Breast epithelium (tissue), 4 donors: ENCODE measurements at regions of chr5 and their contacts with region 1.

Region 1: DNA sequence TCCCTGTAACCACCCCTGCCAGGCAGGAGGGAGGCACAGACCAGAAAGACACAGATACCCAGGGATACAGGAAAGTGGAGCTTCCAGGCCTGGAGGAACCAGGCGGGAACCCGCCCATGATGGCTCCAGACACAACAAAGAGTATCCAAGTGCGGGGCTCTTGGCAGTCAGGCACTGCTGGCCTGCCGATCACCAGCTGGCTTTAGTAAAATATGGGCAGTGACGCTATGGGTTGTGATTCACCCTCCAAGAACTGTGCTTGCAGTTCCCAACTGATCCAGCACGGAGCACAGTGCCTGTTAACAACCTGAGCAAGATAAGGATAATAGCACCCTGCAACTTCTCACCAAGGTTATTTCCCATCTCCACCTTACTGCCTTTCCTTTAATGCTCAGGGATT is 463.3 kb downstream of the IRX1 start:
- DNase-seq: no peak
- H3K4me3 ChIP-seq: no peak overlapping the region
- H3K27ac ChIP-seq: no peak overlapping the region
- H3K4me1 ChIP-seq: no peaks in the 10 kb centered on the region
- H3K27me3 ChIP-seq: no peaks in the 10 kb centered on the region
- CTCF ChIP-seq: no peak
- POLR2A ChIP-seq: no peak

Region 2: GRCh38 chr5:2370626-2371418 is 1688.1 kb before region 1 on chr5:
- intact Hi-C with region 1: loop called (anchors 10 kb)
- DNase-seq: no peak
- H3K4me3 ChIP-seq: no peak overlapping the region
- H3K27ac ChIP-seq: no peak overlapping the region
- H3K4me1 ChIP-seq: no peaks in the 10 kb centered on the region
- H3K27me3 ChIP-seq: no peaks in the 10 kb centered on the region
- CTCF ChIP-seq: no peak
- POLR2A ChIP-seq: no peak

Region 3: GRCh38 chr5:3904584-3904983 is 154.3 kb before region 1 on chr5:
- intact Hi-C with region 1: loop called (anchors 10 kb)
- DNase-seq: no peak
- H3K4me3 ChIP-seq: no peak overlapping the region
- H3K27ac ChIP-seq: no peak overlapping the region
- H3K4me1 ChIP-seq: no peaks in the 10 kb centered on the region
- H3K27me3 ChIP-seq: no peaks in the 10 kb centered on the region
- CTCF ChIP-seq: no peak
- POLR2A ChIP-seq: no peak